ENCODE measurements at regions of chr17 and their contacts with region 1.

Region 1: DNA sequence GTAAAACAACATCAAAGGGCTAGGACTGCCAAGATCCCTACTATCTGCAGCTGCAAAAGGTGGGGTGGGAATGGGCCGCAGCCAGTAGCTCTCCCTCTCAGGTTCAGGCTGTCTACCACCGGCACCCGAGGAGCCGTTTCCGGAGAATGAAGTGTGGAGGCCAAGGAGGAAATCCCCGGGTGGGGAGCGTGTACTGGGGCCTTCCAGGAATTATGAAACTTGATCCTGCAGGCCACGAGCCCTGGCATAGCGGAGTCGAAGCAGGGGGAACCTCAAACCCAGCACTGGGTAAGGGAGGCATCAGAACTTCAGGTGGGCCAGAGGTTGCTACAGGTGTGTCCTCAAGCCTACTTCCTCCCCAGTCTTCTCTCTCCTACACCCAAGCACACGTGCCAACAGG is 5.1 kb downstream of the INPP5K start:
- DNase-seq: no peak
- ATAC-seq: no peak
- H3K4me3 ChIP-seq: no peak overlapping the region
- H3K27ac ChIP-seq: no peak overlapping the region
- H3K4me1 ChIP-seq: peaks cover 5% of the 10 kb centered on the region; the same call in 2 of the 3 replicates
- CTCF ChIP-seq: no peak
- EP300 ChIP-seq: no peak
- POLR2A ChIP-seq: no peak
- RAD21 ChIP-seq: no peak

Region 2: GRCh38 chr17:1416414-1416813 is 94.9 kb before region 1 on chr17:
- CTCF ChIA-PET with region 1: no interaction called
- POLR2A ChIA-PET with region 1: no interaction called
- DNase-seq: no peak
- ATAC-seq: no peak
- H3K4me3 ChIP-seq: no peak overlapping the region
- H3K27ac ChIP-seq: no peak overlapping the region
- H3K4me1 ChIP-seq: no peaks in the 10 kb centered on the region
- CTCF ChIP-seq: no peak
- EP300 ChIP-seq: no peak
- POLR2A ChIP-seq: no peak
- RAD21 ChIP-seq: no peak

Region 3: GRCh38 chr17:1495265-1495989 is 15.9 kb before region 1 on chr17:
- CTCF ChIA-PET with region 1: interaction called, 68 read pairs
- POLR2A ChIA-PET with region 1: interaction called, 29 read pairs
- DNase-seq: no peak
- ATAC-seq: no peak
- H3K4me3 ChIP-seq: no peak overlapping the region
- H3K27ac ChIP-seq: no peak overlapping the region
- H3K4me1 ChIP-seq: peaks cover 9% of the 10 kb centered on the region; the same call in 2 of the 3 replicates
- CTCF ChIP-seq: no peak
- EP300 ChIP-seq: no peak
- POLR2A ChIP-seq: no peak
- RAD21 ChIP-seq: no peak

Measured in A549 (cell line).